HAP-1 (cell line): ENCODE measurements at regions of chr2 and their contacts with region 1.

Region 1: GRCh38 chr2:113756355-113757137 is at the start of gene SLC35F5:
- DNase-seq: peak; percentile 86 to 93
- H3K4me3 ChIP-seq: peak within 1 kb of the TSS; percentile 85
- H3K4me1 ChIP-seq: peaks cover 4% of the 10 kb centered on the region; the same call in 1 of the 2 replicates
- H3K27me3 ChIP-seq: no peaks in the 10 kb centered on the region

Region 2: GRCh38 chr2:112726497-112727190 is 1029.9 kb before region 1 on chr2:
- in situ Hi-C with region 1: no loop called
- DNase-seq: peak; percentile 72 to 92
- H3K4me3 ChIP-seq: no peak overlapping the region
- H3K4me1 ChIP-seq: no peaks in the 10 kb centered on the region; the same call in 1 of the 2 replicates
- H3K27me3 ChIP-seq: no peaks in the 10 kb centered on the region

Region 3: DNA sequence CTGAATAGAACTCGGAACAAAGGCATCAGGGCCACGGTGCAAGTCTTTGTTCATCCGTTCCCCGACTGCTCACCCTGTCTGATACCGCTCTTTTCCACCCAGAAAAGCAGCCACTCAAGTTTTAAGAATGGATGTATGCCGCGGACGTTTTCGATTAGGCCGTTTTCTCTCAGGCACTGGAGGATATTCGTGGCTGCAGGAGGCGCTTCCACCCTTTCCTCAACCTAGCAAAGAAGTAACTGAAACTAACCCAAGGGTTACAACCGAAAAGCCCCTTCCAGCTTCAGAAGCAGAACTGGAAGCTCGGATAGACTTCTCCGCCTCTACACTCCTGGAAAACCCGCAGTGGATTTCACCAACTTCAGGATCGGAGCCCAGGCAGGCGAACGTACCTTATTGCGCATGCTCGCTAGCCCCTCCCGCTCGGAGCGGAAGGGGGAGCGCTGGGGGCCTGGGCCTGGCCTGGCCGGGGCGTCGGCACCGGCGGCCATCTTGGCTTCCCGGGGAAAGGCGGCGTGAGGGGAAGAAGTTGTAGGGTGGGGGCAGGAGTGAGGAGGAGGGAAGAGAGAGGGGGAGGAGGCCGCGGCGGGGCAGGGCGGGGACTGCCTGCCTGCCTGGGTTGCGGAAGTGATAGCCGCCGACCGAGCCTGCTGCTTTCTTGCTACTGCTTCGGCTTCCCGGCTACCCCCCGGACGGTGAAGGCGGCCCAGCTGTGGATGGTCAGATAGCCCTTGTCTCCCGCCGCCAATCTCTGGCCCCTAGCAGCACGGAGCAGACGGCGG is 133.1 kb after region 1 on chr2 and contains the start of gene ACTR3:
- in situ Hi-C with region 1: loop called (anchors 10 kb)
- DNase-seq: peak; percentile 94 to 98
- H3K4me3 ChIP-seq: peak within 1 kb of the TSS; percentile 68
- H3K4me1 ChIP-seq: peaks cover 33% of the 10 kb centered on the region
- H3K27me3 ChIP-seq: no peaks in the 10 kb centered on the region